Aorta (tissue), 5 donors: ENCODE measurements at regions of chr2 and their contacts with region 1.

Region 1: GRCh38 chr2:101518578-101519492 is 43.9 kb upstream of the RFX8 start:
- DNase-seq: no peak
- ATAC-seq: no peak
- H3K4me3 ChIP-seq: no peak overlapping the region
- H3K27ac ChIP-seq: no peak overlapping the region
- H3K4me1 ChIP-seq: no peaks in the 10 kb centered on the region
- H3K27me3 ChIP-seq: no peaks in the 10 kb centered on the region

Region 2: DNA sequence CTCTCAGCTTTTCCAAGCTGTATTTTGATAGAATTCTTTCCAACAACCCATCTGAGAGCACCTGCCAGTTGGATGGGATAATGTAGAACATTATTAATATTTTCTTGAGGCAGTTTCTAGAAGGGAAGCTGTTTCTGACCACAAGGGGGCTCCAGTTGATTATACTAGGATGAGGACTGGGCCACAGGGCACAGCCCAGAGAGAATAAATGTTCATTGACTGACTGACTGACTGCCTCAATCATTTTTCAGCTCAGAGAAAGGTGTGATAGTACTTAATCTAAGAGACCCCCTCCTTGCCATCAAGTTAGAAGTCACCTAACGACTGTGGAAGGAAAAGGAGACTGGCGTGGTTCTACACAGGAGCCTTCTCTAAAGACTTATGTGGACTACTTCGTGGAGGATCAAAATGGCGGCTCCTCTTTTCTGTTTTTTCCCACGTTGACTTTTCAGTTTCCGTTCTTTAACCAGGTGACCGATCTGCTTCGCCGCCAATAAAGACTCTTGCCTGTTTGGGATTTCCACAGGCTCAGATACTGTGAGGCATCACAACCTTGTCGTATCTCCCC is 99.7 kb before region 1 on chr2:
- intact Hi-C with region 1: loop called in 1 of 2 experiments (anchors 5 kb)
- DNase-seq: no peak
- ATAC-seq: peak; percentile 83
- H3K4me3 ChIP-seq: no peak overlapping the region
- H3K27ac ChIP-seq: no peak overlapping the region
- H3K4me1 ChIP-seq: no peaks in the 10 kb centered on the region
- H3K27me3 ChIP-seq: no peaks in the 10 kb centered on the region